ENCODE measurements at regions of chr10 and their contacts with region 1.

Region 1: DNA sequence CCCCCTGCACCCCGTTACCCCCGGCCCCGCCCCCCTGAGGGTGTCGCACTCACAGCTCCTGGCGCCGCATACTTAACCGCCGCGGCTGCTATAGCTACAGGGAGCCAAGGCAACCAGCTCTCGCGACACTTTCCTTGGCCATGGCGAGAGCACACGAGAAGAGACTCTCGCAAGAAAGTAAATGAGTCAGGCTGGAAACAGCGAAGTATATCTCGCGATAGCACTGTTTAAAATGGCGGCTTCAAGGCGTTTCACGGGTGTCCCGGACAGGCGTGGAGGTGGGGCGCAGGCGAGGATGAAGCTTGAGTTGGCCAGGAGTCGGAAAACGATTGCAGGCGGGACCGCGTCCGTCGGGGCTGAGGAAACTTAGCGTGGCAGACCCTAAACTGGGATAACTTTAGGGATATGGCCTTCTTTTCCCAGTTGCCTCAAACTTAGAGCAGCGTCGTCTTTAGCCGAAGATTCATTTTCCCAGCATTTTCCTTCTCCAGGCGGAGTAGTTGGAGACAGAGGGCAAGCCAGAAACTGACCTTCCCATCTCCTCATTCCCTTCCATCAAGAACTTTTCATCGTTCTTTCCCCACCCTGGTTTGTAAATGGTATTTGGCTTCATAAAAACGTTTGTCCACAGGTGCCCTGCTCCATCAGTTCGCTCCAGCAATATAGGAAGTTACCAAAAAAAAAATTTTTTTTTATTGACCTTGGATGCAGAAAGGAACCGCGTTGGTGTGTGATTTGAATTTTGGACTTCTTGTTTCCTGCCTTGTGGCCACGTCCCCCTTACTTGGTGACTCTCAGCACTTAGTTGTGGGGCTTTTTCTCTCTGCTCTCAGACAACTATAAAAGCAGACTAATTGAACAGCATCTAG is 15.2 kb downstream of the MYOZ1 start:
- DNase-seq: peak; percentile 95 to 98 (median 97)
- ATAC-seq: peak; percentile 99
- H3K4me3 ChIP-seq: peak overlapping the region; percentile 66 to 71
- H3K27ac ChIP-seq: peak overlapping the region; percentile 57 to 87 (median 78)
- H3K4me1 ChIP-seq: peaks cover 20% of the 10 kb centered on the region
- H3K27me3 ChIP-seq: no peaks in the 10 kb centered on the region
- CTCF ChIP-seq: no peak
- POLR2A ChIP-seq: peak; percentile 27 to 88 (median 80)

Region 2: DNA sequence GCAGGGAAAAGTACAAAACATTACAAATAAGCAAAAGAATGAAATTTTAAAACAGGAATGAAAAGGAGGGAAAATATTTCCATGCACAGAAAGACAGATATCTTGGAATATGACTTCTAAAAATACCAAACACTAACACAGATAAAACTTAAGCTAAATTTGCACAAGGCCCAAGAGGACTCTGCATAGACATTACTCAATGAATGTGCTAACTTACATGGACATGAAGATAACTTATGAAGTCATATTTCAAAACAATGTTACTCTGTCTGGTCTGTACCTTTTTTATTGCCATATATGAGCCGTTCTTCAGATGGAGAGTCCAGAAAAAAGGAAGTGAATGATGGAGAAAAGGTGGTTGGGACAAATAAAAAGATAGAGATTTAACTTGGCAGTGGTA is 177.7 kb before region 1 on chr10:
- intact Hi-C with region 1: no loop called
- DNase-seq: no peak
- ATAC-seq: no peak
- H3K4me3 ChIP-seq: no peak overlapping the region
- H3K27ac ChIP-seq: no peak overlapping the region
- H3K4me1 ChIP-seq: no peaks in the 10 kb centered on the region
- H3K27me3 ChIP-seq: no peaks in the 10 kb centered on the region
- CTCF ChIP-seq: no peak
- POLR2A ChIP-seq: no peak

Region 3: GRCh38 chr10:73561192-73561591 is 64.9 kb before region 1 on chr10:
- intact Hi-C with region 1: loop called (anchors 10 kb)
- DNase-seq: no peak
- ATAC-seq: no peak
- H3K4me3 ChIP-seq: no peak overlapping the region
- H3K27ac ChIP-seq: no peak overlapping the region
- H3K4me1 ChIP-seq: no peaks in the 10 kb centered on the region
- H3K27me3 ChIP-seq: no peaks in the 10 kb centered on the region
- CTCF ChIP-seq: no peak
- POLR2A ChIP-seq: no peak

Region 4: DNA sequence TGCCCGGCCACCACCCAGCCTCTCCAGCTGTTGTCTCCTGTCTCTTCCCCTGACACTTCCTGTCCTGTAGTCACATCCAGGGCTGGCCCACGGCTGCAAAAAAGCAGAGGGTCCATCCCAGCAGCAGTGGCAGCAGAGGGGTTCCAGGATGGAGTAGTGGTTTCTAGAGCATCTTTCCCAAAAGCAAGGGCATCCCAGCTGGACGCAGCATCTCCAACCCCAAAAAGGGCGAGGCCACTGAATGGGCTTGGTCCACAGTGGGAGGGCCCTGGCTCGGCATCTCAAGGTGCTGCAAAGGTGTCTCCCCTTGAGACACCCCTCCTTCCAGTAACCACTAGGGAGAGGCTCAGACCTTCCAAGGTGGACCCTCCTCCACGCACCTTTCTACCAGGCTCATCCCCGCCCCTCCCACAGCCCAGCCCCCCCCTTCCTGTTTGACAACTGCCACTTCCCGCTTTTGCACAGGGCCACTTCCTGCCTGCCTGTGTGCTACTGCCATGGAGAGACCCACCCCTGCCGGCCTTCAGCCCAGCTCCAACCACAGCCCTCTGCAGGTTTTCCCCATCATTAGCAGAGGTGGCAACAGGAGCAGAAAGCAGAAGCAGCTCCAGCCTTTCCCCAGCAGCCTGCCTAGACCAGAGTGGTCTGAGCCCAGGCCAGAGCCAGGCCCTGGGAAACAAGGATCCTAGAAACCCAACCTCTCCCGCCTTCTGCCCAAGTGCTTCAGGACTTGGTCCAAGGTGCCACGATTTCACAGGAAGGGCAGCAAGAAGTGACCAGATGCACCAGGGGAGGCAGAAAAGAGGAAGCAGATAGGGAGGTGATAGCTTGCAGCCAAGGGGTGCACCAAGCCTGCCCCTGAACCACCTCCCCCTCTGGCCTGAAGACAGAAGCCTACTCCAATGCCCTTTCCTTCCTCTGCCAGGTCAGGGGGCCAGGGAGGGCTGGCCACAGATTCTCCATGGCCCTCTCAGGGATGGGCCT is 239.6 kb after region 1 on chr10:
- intact Hi-C with region 1: no loop called
- DNase-seq: peak in 1 of 4 donors; percentile 55
- ATAC-seq: peak; percentile 39
- H3K4me3 ChIP-seq: no peak overlapping the region
- H3K27ac ChIP-seq: peak overlapping the region in 2 of 4 donors; percentile 8 to 53
- H3K4me1 ChIP-seq: no peaks in the 10 kb centered on the region
- H3K27me3 ChIP-seq: no peaks in the 10 kb centered on the region
- CTCF ChIP-seq: no peak
- POLR2A ChIP-seq: no peak